Activated CD4-positive, alpha-beta T cell treated with anti-CD3 and anti-CD28 coated beads for 36 hours (primary cell): ENCODE measurements at regions of chr13 and their contacts with region 1.

Region 1: DNA sequence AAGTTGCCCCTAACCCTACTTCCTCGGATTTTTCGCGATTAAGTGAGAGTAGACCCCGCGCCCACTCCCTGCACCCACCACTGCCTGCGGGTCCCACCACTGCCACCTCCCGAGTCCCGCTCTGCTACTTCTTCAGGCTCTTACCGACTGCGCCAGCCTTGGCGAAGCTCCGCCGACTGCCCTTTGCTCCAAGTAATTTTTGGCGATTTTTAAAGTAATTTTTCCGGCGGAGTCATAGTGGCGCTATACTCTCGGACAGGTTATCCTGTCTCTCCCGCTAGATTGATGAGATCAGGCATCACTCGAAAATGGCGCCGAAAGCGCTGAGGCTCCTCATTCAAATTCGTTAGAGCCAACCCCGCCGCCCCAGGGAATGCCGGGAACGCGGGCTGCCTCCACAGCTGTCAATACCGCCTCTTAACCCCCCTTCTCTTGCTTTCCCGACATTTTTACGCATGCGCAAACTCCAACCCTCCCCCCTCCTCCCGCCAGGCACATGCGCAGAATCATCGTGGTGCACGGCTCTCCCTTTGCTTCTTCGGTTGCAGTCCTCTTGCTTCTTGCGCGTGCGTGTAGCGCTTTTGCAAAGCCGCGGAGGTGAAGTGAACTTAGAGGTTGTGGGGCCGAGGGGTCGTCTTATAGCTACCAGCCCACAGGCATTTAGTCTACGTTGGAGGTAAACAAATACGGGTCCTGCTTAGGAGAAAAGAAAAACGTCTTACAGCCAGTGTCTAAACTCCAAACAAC is 66.6 kb downstream of the KCNRG start:
- DNase-seq: peak; percentile 99
- ATAC-seq: peak; percentile 76
- H3K4me3 Mint-ChIP-seq: peak overlapping the region; percentile 94
- H3K27ac Mint-ChIP-seq: peak overlapping the region; percentile 98
- H3K4me1 Mint-ChIP-seq: peaks cover 37% of the 10 kb centered on the region
- H3K27me3 Mint-ChIP-seq: peaks cover 8% of the 10 kb centered on the region

Region 2: DNA sequence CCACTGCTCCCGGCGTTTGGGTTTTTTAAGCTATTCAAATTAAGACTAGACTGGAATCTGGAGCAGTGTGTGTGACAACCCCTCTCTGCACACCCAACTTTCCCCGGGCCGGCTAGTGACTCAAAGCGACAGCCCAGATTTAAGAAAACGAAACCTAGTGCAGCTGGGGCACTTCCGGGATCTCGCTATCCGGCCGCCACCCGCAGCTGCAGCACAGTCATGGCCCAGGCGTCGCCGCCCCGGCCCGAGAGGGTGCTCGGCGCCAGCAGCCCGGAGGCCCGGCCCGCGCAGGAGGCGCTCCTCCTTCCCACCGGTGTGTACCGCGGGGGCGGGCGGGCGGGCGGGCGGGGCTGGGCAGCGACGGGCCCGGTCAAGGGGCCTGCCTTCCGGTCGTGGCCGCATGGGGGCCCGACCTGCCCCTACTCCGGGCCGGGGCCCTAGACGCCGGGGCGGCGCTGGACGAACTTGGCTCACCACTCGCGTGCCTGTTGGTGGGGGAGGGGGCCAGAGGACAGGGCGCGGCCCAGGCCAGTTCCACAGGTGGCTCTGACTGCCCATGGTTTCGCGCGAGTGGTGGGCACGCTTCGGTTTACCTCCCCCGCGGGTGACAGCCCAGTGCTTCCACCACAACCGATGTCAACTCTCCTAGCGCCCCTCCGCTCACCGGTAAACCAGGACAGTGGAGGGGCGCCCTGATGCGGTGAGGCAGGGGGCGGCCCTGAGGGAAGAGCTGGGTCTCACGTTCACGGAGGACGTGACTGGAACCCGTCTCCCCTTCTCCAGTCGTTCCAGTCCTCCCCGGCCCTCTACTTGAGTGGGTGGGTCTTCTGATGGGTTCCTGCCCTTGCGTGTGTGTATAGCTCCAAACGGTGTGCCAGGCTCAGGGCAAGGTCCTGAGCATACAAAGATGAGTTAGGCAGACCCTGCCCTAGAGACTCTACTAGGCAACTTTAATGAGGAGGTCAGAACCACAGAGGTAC is 585.8 kb before region 1 on chr13 and contains the start of gene PHF11:
- CTCF ChIA-PET with region 1: no interaction called
- POLR2A ChIA-PET with region 1: no interaction called
- intact Hi-C with region 1: loop called in 1 of 2 experiments (anchors 5 kb)
- DNase-seq: peak; percentile 95
- ATAC-seq: peak; percentile 81
- H3K4me3 Mint-ChIP-seq: peak within 1 kb of the TSS; percentile 91
- H3K27ac Mint-ChIP-seq: peak within 1 kb of the TSS; percentile 99
- H3K4me1 Mint-ChIP-seq: peaks cover 49% of the 10 kb centered on the region
- H3K27me3 Mint-ChIP-seq: no peaks in the 10 kb centered on the region
- total RNA-seq, gene PHF11: 84.0 to 106 TPM

Region 3: GRCh38 chr13:49569956-49570689 is 511.7 kb before region 1 on chr13:
- CTCF ChIA-PET with region 1: no interaction called
- POLR2A ChIA-PET with region 1: no interaction called
- intact Hi-C with region 1: no loop called
- DNase-seq: peak; percentile 19
- ATAC-seq: peak; percentile 95
- H3K4me3 Mint-ChIP-seq: no peak overlapping the region
- H3K27ac Mint-ChIP-seq: peak overlapping the region; percentile 71
- H3K4me1 Mint-ChIP-seq: peaks cover 25% of the 10 kb centered on the region
- H3K27me3 Mint-ChIP-seq: no peaks in the 10 kb centered on the region

Region 4: DNA sequence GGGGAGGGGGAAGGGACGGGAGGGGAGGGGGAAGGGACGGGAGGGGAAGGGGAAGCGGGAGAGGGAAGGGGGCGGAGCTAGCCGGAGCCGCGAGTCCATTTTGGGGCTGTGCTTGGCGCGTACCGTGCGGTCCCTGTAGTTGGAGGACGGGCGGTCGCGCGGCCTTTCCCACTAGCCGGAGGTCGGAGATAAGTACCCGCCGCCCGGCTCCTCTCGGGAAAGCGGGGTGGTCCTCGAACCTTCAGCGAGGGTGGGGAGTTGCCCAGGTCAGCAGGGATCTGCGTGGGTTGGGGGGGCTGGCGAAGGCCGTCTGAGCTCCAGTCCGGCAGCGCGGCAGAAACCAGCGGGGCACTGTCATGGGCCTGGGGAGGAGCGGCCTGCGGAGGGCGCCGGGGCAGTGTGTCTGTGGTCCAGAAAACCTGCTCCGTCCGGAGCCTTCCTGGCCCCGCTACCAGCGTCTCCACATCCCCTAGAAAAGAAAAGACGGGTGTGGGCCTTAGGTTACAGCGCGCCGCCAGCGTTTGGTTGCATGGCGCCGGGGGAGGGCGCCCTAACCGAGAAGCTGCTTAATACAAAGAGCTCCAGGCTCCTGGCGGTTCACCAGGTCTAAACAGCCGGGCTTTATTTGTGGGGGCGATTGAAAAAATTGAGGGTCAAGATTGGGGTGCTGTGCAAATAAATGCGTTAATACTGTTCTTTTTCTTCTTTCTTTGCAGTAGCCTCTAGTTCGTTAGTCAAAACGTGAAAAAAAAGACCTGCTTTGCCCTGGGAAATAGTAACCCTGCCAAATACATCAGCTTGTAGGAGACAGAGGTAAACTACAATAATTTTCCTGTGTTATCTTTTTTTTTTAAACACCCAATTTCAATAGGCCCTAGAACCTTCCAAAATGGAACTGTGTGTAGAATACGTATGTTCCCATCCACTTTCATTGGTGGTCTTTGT is 84.6 kb before region 1 on chr13 and contains the start of gene TRIM13:
- CTCF ChIA-PET with region 1: interaction called, 29 read pairs
- POLR2A ChIA-PET with region 1: interaction called, 16 read pairs
- intact Hi-C with region 1: loop called (anchors 1 kb)
- DNase-seq: peak; percentile 90
- ATAC-seq: peak; percentile 86
- H3K4me3 Mint-ChIP-seq: peak within 1 kb of the TSS; percentile 77
- H3K27ac Mint-ChIP-seq: peak within 1 kb of the TSS; percentile 76
- H3K4me1 Mint-ChIP-seq: peaks cover 47% of the 10 kb centered on the region
- H3K27me3 Mint-ChIP-seq: no peaks in the 10 kb centered on the region
- total RNA-seq, gene TRIM13: 10.6 to 12.9 TPM

Region 5: DNA sequence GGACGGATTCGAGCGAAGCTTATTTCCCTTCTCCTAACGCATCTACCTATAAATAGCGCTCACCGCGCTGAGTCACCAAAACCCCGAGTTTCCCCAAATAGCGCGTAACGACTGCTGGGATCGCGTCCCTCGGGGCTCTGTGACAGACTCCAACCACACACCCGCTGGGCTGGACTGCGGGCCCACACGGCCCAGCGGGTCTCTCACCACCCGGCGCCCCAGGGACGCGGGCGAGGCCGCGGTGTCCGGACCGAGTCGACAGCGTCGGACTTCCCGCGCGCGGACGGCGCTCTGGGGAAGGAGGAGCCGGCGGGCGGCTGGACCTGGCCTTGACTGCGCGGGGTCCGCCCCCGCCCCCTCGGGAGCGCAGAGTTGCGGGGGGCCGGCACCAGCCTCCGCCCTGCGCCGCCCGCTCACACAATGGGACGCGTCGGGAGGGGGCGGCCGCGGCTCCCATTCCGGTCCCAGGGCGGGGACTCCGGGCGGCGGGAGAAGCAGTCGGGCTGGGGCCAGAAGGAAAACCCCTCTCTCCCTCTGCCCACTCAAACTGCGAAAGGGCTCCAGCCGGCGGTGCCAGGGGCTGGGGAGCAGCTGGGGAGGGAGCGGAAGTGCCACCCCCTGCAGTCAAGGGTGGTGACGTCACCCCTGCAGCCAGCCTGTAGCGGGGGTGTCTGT is 42.1 kb after region 1 on chr13:
- CTCF ChIA-PET with region 1: interaction called, 8 read pairs
- POLR2A ChIA-PET with region 1: interaction called, 20 read pairs
- intact Hi-C with region 1: loop called (anchors 1 kb)
- DNase-seq: peak; percentile 86
- ATAC-seq: peak; percentile 68
- H3K4me3 Mint-ChIP-seq: peak overlapping the region; percentile 72
- H3K27ac Mint-ChIP-seq: peak overlapping the region; percentile 89
- H3K4me1 Mint-ChIP-seq: peaks cover 49% of the 10 kb centered on the region
- H3K27me3 Mint-ChIP-seq: peaks cover 13% of the 10 kb centered on the region

Region 6: GRCh38 chr13:50365408-50366391 is 283.8 kb after region 1 on chr13:
- CTCF ChIA-PET with region 1: interaction called, 3 read pairs
- POLR2A ChIA-PET with region 1: no interaction called
- intact Hi-C with region 1: loop called (anchors 1 to 5 kb)
- DNase-seq: peak; percentile 75
- ATAC-seq: peak; percentile 64
- H3K4me3 Mint-ChIP-seq: peak overlapping the region; percentile 13
- H3K27ac Mint-ChIP-seq: peak overlapping the region; percentile 71
- H3K4me1 Mint-ChIP-seq: peaks cover 43% of the 10 kb centered on the region
- H3K27me3 Mint-ChIP-seq: peaks cover 32% of the 10 kb centered on the region

Region 7: GRCh38 chr13:50893211-50893852 is 811.5 kb after region 1 on chr13:
- CTCF ChIA-PET with region 1: interaction called, 3 read pairs
- POLR2A ChIA-PET with region 1: no interaction called
- intact Hi-C with region 1: loop called (anchors 5 kb)
- DNase-seq: peak; percentile 37
- ATAC-seq: peak; percentile 94
- H3K4me3 Mint-ChIP-seq: peak overlapping the region; percentile 50
- H3K27ac Mint-ChIP-seq: peak overlapping the region; percentile 89
- H3K4me1 Mint-ChIP-seq: peaks cover 40% of the 10 kb centered on the region
- H3K27me3 Mint-ChIP-seq: no peaks in the 10 kb centered on the region